ENCODE measurements at regions of chr11 and their contacts with region 1.

Region 1: GRCh38 chr11:112226062-112226830 is at the start of gene PTS:
- DNase-seq: peak; percentile 79 to 90 (median 88)
- ATAC-seq: peak; percentile 94
- H3K4me3 ChIP-seq: peak within 1 kb of the TSS; percentile 100
- H3K4me3 Mint-ChIP-seq: peak within 1 kb of the TSS; percentile 83 to 95 (median 91)
- H3K27ac ChIP-seq: peak within 1 kb of the TSS; percentile 95
- H3K27ac Mint-ChIP-seq: peak within 1 kb of the TSS; percentile 92 to 99 (median 98)
- H3K4me1 ChIP-seq: peaks cover 9% of the 10 kb centered on the region in 2 donors
- H3K4me1 Mint-ChIP-seq: peaks cover 11 to 38% (median 30%) of the 10 kb centered on the region in 7 donors
- H3K27me3 ChIP-seq: no peaks in the 10 kb centered on the region
- H3K27me3 Mint-ChIP-seq: peaks cover 0 to 2% (median 0%) of the 10 kb centered on the region in 5 donors
- total RNA-seq, gene PTS: 19.2 to 71.3 (median 24.0) TPM

Region 2: DNA sequence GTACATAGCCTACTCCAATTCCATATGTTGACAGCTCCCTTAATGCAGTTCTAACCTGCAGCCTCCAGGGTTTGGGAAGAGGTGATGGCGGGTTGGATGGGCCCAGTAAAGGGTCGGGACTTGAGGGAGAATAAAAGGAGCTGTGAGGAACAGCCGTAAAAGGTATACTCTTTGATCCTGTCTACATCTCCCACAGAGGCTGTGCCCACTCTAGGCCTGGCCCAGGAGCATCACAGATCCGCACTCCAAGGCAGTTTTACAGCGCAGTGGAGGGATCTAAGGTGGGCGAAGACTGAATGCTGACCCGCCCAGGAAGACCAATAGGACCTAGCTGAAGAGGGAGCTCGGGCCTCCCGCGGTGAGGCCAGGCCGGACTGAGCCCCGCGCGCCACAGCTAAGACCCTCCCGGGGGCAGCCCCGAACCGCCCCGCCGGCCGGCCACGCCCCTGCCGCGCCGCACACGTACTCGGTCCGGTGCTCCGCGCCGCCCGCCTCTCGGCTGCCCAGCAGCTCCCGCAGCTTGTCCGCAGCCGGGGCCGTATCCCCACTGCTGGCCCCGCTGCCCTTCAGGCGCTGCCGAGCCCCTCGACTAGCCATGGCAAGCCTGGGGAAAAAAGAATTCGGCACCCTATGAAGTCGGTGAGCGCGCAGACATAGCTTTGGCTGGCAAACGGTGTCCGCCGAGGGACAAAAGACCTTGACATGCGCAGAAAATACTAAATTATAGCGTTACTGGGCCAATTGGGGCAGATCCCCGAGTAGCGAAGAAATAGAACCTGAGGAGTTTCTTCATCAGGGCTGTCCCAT is 355.2 kb before region 1 on chr11 and contains the start of gene ALG9:
- CTCF ChIA-PET with region 1: no interaction called
- POLR2A ChIA-PET with region 1: no interaction called
- intact Hi-C with region 1: loop called in 1 of 2 experiments (anchors 2 kb)
- DNase-seq: peak; percentile 79 to 94 (median 88)
- ATAC-seq: peak; percentile 91
- H3K4me3 ChIP-seq: peak within 1 kb of the TSS; percentile 74
- H3K4me3 Mint-ChIP-seq: peak within 1 kb of the TSS; percentile 86 to 96 (median 93)
- H3K27ac ChIP-seq: peak within 1 kb of the TSS; percentile 91
- H3K27ac Mint-ChIP-seq: peak within 1 kb of the TSS; percentile 87 to 98 (median 94)
- H3K4me1 ChIP-seq: peaks cover 8 to 10% of the 10 kb centered on the region in 2 donors
- H3K4me1 Mint-ChIP-seq: peaks cover 9 to 41% (median 34%) of the 10 kb centered on the region in 7 donors
- H3K27me3 ChIP-seq: no peaks in the 10 kb centered on the region
- H3K27me3 Mint-ChIP-seq: no peaks in the 10 kb centered on the region
- total RNA-seq, gene ALG9: 16.4 to 30.2 (median 29.2) TPM

Region 3: DNA sequence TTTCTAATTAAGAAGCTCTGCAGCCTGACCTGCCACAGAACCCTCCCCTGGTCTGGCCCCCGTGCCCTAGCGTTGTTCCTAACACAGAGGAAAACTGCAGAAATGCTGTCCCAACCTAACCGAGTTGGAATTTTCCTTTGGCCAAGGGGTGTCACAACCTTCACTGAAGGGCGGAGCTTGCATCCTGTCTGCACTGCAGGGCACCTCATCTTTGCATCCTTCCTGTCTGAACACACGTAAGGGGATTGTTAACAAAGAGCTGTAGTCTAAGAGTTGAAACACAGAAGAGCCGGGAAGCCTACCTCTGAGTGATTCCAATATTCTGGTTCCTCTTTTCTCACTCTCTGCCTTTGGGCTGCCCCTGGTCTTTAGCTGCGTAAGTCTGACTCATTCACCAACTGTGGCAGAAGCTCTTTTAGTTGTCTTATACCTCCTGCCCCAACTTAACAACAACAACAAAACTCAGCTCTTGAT is 287.5 kb before region 1 on chr11:
- CTCF ChIA-PET with region 1: no interaction called
- POLR2A ChIA-PET with region 1: no interaction called
- intact Hi-C with region 1: loop called in 1 of 2 experiments (anchors 5 kb)
- DNase-seq: peak in 6 of 9 donors; percentile 18 to 38 (median 27)
- ATAC-seq: peak; percentile 73
- H3K4me3 ChIP-seq: no peak overlapping the region
- H3K4me3 Mint-ChIP-seq: peak overlapping the region; percentile 59 to 95 (median 78)
- H3K27ac ChIP-seq: peak overlapping the region; percentile 49
- H3K27ac Mint-ChIP-seq: peak overlapping the region; percentile 67 to 96 (median 84)
- H3K4me1 ChIP-seq: peaks cover 4 to 29% of the 10 kb centered on the region in 2 donors
- H3K4me1 Mint-ChIP-seq: peaks cover 16 to 48% (median 32%) of the 10 kb centered on the region in 7 donors
- H3K27me3 ChIP-seq: no peaks in the 10 kb centered on the region
- H3K27me3 Mint-ChIP-seq: no peaks in the 10 kb centered on the region

Region 4: GRCh38 chr11:112086422-112087191 is 139.6 kb before region 1 on chr11 and contains the starts of genes SDHD and TIMM8B:
- CTCF ChIA-PET with region 1: no interaction called
- POLR2A ChIA-PET with region 1: no interaction called
- intact Hi-C with region 1: loop called (anchors 1 kb)
- DNase-seq: peak; percentile 90 to 98 (median 97)
- ATAC-seq: peak; percentile 94
- H3K4me3 ChIP-seq: peak within 1 kb of the TSS; percentile 99
- H3K4me3 Mint-ChIP-seq: peak within 1 kb of the TSS; percentile 90 to 100 (median 98)
- H3K27ac ChIP-seq: peak within 1 kb of the TSS; percentile 76
- H3K27ac Mint-ChIP-seq: peak within 1 kb of the TSS; percentile 92 to 99 (median 96)
- H3K4me1 ChIP-seq: peaks cover 21 to 23% of the 10 kb centered on the region in 2 donors
- H3K4me1 Mint-ChIP-seq: peaks cover 44 to 69% (median 62%) of the 10 kb centered on the region in 7 donors
- H3K27me3 ChIP-seq: no peaks in the 10 kb centered on the region
- H3K27me3 Mint-ChIP-seq: peaks cover 0 to 2% (median 0%) of the 10 kb centered on the region in 5 donors
- total RNA-seq, gene SDHD: 39.6 to 84.4 (median 65.8) TPM
- total RNA-seq, gene TIMM8B: 15.5 to 61.1 (median 24.3) TPM

Region 5: GRCh38 chr11:112156956-112157766 is 69.1 kb before region 1 on chr11:
- CTCF ChIA-PET with region 1: no interaction called
- POLR2A ChIA-PET with region 1: no interaction called
- intact Hi-C with region 1: no loop called
- DNase-seq: no peak
- ATAC-seq: peak; percentile 86
- H3K4me3 ChIP-seq: no peak overlapping the region
- H3K4me3 Mint-ChIP-seq: no peak overlapping the region
- H3K27ac ChIP-seq: no peak overlapping the region
- H3K27ac Mint-ChIP-seq: no peak overlapping the region
- H3K4me1 ChIP-seq: no peaks in the 10 kb centered on the region
- H3K4me1 Mint-ChIP-seq: peaks cover 0 to 8% (median 0%) of the 10 kb centered on the region in 7 donors
- H3K27me3 ChIP-seq: no peaks in the 10 kb centered on the region
- H3K27me3 Mint-ChIP-seq: peaks cover 4 to 9% (median 5%) of the 10 kb centered on the region in 5 donors

Region 6: DNA sequence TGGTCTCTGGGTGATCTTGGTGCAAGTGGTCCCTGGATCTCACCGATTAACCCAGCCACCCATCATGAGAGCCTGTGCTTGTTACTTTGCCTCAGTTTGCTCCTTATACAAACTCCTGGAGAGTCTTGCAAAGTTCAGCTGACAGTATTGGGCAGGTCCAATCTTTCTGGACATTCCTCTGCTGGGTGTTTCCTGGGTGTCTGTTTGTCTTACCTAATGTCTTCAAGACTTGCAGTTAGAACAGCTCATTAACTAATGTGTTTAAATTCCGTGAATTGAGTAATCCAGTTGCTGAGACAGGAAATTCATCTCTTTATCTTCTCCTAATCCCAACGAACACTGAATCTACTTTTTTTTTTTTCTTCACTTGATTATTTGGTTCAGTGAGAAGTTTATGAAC is 30.3 kb before region 1 on chr11:
- CTCF ChIA-PET with region 1: no interaction called
- POLR2A ChIA-PET with region 1: no interaction called
- intact Hi-C with region 1: no loop called
- DNase-seq: no peak
- ATAC-seq: no peak
- H3K4me3 ChIP-seq: no peak overlapping the region
- H3K4me3 Mint-ChIP-seq: no peak overlapping the region
- H3K27ac ChIP-seq: no peak overlapping the region
- H3K27ac Mint-ChIP-seq: no peak overlapping the region
- H3K4me1 ChIP-seq: no peaks in the 10 kb centered on the region
- H3K4me1 Mint-ChIP-seq: peaks cover 0 to 1% (median 0%) of the 10 kb centered on the region in 7 donors
- H3K27me3 ChIP-seq: no peaks in the 10 kb centered on the region
- H3K27me3 Mint-ChIP-seq: peaks cover 0 to 25% (median 0%) of the 10 kb centered on the region in 5 donors

Region 7: DNA sequence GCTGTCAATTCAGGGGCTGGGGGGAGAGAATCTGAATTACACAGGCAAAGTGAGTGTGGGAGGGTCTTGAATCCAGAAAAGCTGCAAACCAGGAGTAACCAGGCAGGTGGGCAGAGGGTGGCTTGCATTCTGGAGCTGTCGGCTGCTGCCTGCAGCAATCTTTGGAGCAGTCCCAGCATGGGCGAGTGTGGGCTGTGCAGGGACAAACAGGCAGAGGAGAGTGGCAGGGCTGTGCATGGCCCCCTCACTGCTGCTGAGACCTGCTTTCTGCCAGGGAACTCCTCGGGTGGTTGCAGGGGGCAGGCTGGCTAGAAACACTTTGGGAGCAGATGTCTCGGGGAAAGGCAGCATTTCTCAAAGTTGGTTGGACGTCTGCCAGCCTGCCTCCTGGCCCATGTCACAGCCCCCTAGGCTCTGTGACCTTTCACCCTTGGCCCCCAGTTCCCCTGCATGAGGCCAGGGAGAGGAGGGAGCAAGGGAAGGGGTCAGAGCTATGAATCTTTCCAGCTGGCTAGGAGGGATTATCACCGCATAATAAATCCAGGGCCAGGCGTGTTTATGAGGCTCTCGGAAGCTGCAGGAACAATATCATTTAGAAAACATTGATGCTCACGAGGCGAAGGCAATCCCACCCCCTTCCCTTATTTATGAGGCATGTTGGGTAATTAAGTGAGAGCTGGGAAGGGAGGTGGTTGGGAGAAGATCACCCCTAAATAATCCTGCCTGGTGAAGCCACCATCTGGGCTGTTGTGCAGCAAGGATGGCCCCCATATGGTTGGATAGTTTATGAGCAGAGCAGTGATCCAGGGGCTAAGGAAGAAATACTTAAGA is 522.7 kb after region 1 on chr11:
- CTCF ChIA-PET with region 1: no interaction called
- POLR2A ChIA-PET with region 1: no interaction called
- intact Hi-C with region 1: no loop called
- DNase-seq: no peak
- ATAC-seq: no peak
- H3K4me3 ChIP-seq: no peak overlapping the region
- H3K4me3 Mint-ChIP-seq: no peak overlapping the region
- H3K27ac ChIP-seq: no peak overlapping the region
- H3K27ac Mint-ChIP-seq: no peak overlapping the region
- H3K4me1 ChIP-seq: no peaks in the 10 kb centered on the region
- H3K4me1 Mint-ChIP-seq: peaks cover 0 to 6% (median 0%) of the 10 kb centered on the region in 7 donors
- H3K27me3 ChIP-seq: no peaks in the 10 kb centered on the region
- H3K27me3 Mint-ChIP-seq: peaks cover 6 to 60% (median 34%) of the 10 kb centered on the region in 5 donors

Region 8: DNA sequence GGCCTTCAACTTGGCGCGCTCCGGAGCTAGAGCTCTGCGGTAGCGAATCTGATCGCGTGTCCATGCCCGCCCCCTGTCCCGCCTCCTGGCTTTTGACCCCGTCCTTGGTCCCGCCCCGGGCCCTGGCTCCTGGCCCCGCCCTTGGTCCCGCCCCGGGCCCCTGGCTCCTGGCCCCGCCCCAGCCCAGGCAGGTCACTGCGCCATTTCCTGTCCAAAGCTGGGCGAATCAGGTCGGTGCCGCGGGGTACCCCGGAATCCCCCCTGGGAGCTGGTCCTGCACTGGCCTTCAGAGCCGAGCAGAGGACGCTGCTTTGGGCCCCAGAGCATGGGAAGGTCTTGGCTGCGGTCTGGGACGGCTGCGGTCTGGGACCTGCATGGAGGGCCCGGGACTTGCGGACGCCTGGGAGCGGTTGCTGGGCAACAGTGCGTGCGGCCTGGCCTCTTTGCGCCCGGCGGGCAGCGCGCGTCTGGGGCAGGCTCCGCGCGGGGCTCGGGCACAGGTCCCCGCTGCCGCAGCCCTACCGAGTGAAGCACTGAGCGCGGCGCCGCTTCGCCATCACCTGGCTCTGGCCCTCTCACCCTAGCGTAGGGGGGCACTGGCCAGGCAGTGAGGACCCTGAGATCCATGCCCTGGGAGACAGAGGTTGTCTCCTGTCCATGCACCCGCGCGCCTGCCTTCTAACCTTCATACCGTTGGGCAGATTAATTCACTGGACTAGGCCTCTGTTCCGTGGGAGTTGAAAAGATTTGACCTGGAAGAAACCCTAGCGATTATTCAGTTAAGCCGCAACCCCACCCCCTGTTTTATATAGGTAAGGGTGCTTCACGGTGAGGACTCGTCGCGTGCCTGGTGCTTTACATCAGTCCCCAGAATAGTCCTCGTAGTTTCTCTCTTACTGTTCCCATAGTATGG is 1088.4 kb after region 1 on chr11 and contains the start of gene TTC12:
- CTCF ChIA-PET with region 1: no interaction called
- POLR2A ChIA-PET with region 1: interaction called, 4 read pairs
- intact Hi-C with region 1: loop called (anchors 1 kb)
- DNase-seq: peak; percentile 81 to 95 (median 89)
- ATAC-seq: peak; percentile 100
- H3K4me3 ChIP-seq: peak within 1 kb of the TSS; percentile 78
- H3K4me3 Mint-ChIP-seq: peak within 1 kb of the TSS; percentile 77 to 93 (median 88)
- H3K27ac ChIP-seq: peak within 1 kb of the TSS; percentile 91
- H3K27ac Mint-ChIP-seq: peak within 1 kb of the TSS; percentile 75 to 95 (median 92)
- H3K4me1 ChIP-seq: peaks cover 10 to 16% of the 10 kb centered on the region in 2 donors
- H3K4me1 Mint-ChIP-seq: peaks cover 18 to 58% (median 49%) of the 10 kb centered on the region in 7 donors
- H3K27me3 ChIP-seq: no peaks in the 10 kb centered on the region
- H3K27me3 Mint-ChIP-seq: peaks cover 0 to 3% (median 0%) of the 10 kb centered on the region in 5 donors
- total RNA-seq, gene TTC12: 14.1 to 84.5 (median 58.2) TPM

Measured in naive thymus-derived CD4-positive, alpha-beta T cell (primary cell).